Heart right ventricle (tissue), 16 donors: ENCODE measurements at regions of chr22 and their contacts with region 1.

Region 1: GRCh38 chr22:30386960-30387827 is at the start of gene RNF215:
- DNase-seq: peak; percentile 78 to 90
- ATAC-seq: peak; percentile 86 to 96 (median 92)
- H3K4me3 ChIP-seq: peak within 1 kb of the TSS; percentile 35 to 74 (median 62)
- H3K27ac ChIP-seq: peak within 1 kb of the TSS; percentile 52 to 84 (median 74)
- H3K4me1 ChIP-seq: peaks cover 4 to 26% (median 16%) of the 10 kb centered on the region in 9 donors
- H3K27me3 ChIP-seq: peaks cover 0 to under 1% (median 0%) of the 10 kb centered on the region in 7 donors
- CTCF ChIP-seq: peak; percentile 88 to 99 (median 95)
- total RNA-seq, gene RNF215: 3.4 to 10.5 (median 6.0) TPM

Region 2: DNA sequence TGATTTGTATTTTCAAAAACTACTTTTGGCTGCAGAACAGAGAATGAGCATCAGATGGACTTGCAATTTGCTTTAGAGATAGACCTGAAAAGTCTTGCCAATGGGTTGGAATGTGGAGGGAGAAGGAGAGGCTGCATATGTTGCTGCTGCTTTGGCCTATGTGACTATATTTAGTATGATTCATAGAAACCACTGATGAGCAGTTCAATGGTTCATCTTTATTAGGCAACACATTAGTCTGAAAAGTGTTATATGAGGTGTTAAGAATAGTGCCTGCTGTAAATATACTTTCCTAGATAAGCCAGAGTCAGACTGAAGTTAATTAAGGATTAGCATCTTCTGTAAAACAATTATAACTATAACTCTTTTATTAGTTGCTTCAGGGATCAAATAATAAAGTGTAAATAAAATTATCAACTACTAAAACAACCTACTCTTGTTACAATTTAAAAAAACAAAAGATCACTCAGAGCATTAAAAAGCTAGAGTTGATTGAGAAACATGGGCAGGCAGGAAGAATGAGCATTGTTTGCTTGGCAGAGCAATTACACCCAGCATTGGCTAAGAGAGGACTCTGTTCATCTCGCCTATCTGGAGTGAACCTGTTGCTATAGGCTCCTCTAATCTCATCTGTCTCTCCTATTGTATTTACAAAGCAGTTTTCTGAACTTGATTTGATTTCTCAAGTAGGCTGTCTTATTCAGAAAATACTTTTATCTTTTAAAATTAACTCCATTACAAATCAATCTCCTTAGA is 270.7 kb before region 1 on chr22:
- intact Hi-C with region 1: loop called in 1 of 10 experiments (anchors 5 kb)
- DNase-seq: no peak
- ATAC-seq: no peak
- H3K4me3 ChIP-seq: no peak overlapping the region
- H3K27ac ChIP-seq: peak overlapping the region in 1 of 10 donors; percentile 31
- H3K4me1 ChIP-seq: peaks cover 0 to 8% (median 0%) of the 10 kb centered on the region in 9 donors
- H3K27me3 ChIP-seq: peaks cover 0 to 26% (median 15%) of the 10 kb centered on the region in 7 donors
- CTCF ChIP-seq: no peak

Region 3: DNA sequence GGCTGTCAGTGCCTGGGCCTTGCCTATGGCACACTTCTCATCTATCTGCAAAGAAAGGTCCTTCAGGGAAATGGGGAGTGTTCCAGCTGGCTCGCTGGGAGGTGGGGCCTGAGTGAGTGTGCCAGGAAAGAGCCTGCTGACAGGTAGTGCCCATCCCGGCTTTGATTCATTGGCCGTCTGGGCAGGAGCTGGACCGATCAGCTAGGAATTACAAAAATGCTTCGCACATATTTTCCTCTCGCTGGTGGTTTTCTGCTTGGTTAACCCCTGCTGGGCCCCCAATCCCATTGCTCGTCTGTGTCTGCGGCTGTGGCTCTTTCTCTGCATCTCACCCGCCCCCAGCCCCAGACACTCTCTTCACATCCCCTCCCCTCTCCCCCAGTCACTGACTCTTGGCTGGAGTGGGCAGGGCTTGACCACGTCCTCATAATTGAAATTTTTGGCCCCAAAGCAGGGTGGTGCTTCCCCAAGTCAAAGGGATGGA is 151.5 kb before region 1 on chr22:
- intact Hi-C with region 1: no loop called
- DNase-seq: no peak
- ATAC-seq: peak in 2 of 8 donors; percentile 58
- H3K4me3 ChIP-seq: no peak overlapping the region
- H3K27ac ChIP-seq: peak overlapping the region in 1 of 10 donors; percentile 59
- H3K4me1 ChIP-seq: peaks cover 0 to 7% (median 0%) of the 10 kb centered on the region in 9 donors
- H3K27me3 ChIP-seq: peaks cover 0 to 49% (median 40%) of the 10 kb centered on the region in 7 donors
- CTCF ChIP-seq: no peak

Region 4: DNA sequence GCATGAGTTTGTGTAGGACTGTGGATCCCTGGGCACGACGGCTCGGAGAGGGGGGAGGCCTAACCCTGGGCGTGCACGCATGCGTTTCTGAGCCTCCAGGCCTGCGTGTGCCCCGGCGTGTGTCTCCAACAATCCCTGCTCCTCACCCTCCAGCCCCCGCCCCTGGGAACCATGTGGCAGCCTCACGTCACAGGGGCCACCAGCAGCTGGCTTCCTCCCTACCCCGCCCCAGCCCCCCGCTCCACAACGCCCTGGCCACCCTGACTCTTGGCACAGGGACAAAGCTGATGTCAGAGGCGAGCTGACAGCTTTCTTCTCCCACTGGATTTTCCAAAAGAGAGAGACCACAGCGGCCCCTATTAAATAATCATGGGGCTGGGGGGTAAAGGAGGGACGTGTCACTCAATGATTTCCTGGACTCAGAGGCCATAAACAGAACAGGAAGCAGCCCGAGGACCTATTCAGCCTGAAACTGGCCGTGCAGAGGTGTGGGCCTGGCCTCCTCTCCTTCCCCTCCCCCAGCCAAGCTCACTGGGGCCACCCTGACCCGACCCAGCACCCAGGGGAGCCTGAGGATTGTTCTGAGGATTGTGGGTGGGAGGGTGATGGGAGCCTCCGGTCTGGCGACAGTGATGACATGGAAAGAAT is 133.9 kb before region 1 on chr22:
- intact Hi-C with region 1: no loop called
- DNase-seq: peak; percentile 78 to 80
- ATAC-seq: peak; percentile 21 to 61 (median 44)
- H3K4me3 ChIP-seq: no peak overlapping the region
- H3K27ac ChIP-seq: peak overlapping the region in 4 of 10 donors; percentile 43 to 88 (median 55)
- H3K4me1 ChIP-seq: peaks cover 5 to 64% (median 21%) of the 10 kb centered on the region in 9 donors
- H3K27me3 ChIP-seq: peaks cover 0 to 46% (median 33%) of the 10 kb centered on the region in 7 donors
- CTCF ChIP-seq: no peak

Region 5: GRCh38 chr22:30289134-30289979 is 97.8 kb before region 1 on chr22 and contains the start of gene CASTOR1:
- intact Hi-C with region 1: loop called (anchors 1 to 5 kb)
- DNase-seq: peak; percentile 99
- ATAC-seq: peak; percentile 87 to 92 (median 91)
- H3K4me3 ChIP-seq: peak within 1 kb of the TSS; percentile 56 to 99 (median 92)
- H3K27ac ChIP-seq: peak within 1 kb of the TSS; percentile 83 to 98 (median 93)
- H3K4me1 ChIP-seq: peaks cover 17 to 49% (median 39%) of the 10 kb centered on the region in 9 donors
- H3K27me3 ChIP-seq: no peaks in the 10 kb centered on the region
- CTCF ChIP-seq: peak in 1 of 9 donors; percentile 6
- total RNA-seq, gene CASTOR1: 2.8 to 7.9 (median 5.4) TPM

Region 6: GRCh38 chr22:30351226-30351625 is 36.0 kb before region 1 on chr22:
- intact Hi-C with region 1: loop called in 1 of 10 experiments (anchors 5 kb)
- DNase-seq: no peak
- ATAC-seq: peak in 1 of 8 donors; percentile 23
- H3K4me3 ChIP-seq: no peak overlapping the region
- H3K27ac ChIP-seq: no peak overlapping the region
- H3K4me1 ChIP-seq: peaks cover 11 to 48% (median 32%) of the 10 kb centered on the region in 9 donors
- H3K27me3 ChIP-seq: no peaks in the 10 kb centered on the region
- CTCF ChIP-seq: no peak

Region 7: GRCh38 chr22:30444632-30445437 is 57.6 kb after region 1 on chr22:
- intact Hi-C with region 1: no loop called
- DNase-seq: no peak
- ATAC-seq: peak in 2 of 8 donors; percentile 53 to 55
- H3K4me3 ChIP-seq: no peak overlapping the region
- H3K27ac ChIP-seq: no peak overlapping the region
- H3K4me1 ChIP-seq: peaks cover 0 to 10% (median 0%) of the 10 kb centered on the region in 9 donors
- H3K27me3 ChIP-seq: peaks cover 0 to 65% (median 17%) of the 10 kb centered on the region in 7 donors
- CTCF ChIP-seq: peak in 8 of 9 donors; percentile 38 to 79 (median 67)

Region 8: DNA sequence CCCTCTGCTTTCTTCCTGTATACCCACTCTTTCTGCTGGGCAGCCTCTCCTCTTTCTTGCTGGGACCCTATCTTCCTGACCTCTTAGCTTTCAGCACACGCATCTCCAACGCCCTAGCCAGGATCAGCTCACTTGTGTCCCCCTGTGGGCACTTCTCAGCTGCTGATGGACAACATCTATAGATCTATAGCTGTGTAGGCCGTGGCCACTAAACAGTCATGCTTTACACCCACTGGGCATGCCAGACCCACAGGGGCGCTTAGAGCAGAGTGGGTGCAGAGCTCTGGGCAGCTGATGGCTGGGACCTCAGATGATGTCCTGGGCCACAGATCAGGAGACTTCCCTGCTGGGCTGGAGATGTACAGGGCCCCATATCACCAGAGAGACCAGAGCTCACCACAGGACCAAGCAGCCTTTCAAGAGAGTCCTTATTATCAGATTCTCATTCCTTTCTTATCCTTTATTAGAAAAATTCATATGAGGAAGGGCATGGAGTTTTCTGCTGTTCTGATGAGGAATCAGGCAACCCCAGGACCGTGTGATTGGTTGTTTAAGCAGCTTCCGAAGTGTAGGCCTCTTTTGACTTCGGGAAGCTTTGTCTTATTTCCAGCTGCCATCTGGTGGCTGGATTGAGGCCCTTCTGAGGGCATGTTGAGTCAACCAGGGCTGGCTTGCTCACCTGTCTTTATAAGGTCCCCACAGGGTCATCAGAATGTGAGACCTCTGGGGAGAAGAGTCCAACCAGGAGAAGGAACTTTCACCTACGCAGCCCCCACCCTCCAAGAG is 368.0 kb after region 1 on chr22:
- intact Hi-C with region 1: loop called in 2 of 10 experiments (anchors 10 kb)
- DNase-seq: peak in 1 of 2 donors; percentile 29
- ATAC-seq: peak; percentile 68 to 88 (median 78)
- H3K4me3 ChIP-seq: no peak overlapping the region
- H3K27ac ChIP-seq: no peak overlapping the region
- H3K4me1 ChIP-seq: peaks cover 0 to 3% (median 0%) of the 10 kb centered on the region in 9 donors
- H3K27me3 ChIP-seq: no peaks in the 10 kb centered on the region
- CTCF ChIP-seq: peak; percentile 39 to 78 (median 64)